A673 (cell line): ENCODE measurements at regions of chr1 and their contacts with region 1.

Region 1: GRCh38 chr1:154546264-154547063 is 12.0 kb downstream of the UBE2Q1 start:
- DNase-seq: peak; percentile 77
- H3K4me3 ChIP-seq: no peak overlapping the region
- H3K27ac ChIP-seq: no peak overlapping the region
- H3K4me1 ChIP-seq: no peaks in the 10 kb centered on the region
- H3K27me3 ChIP-seq: peaks cover 3% of the 10 kb centered on the region
- CTCF ChIP-seq: peak; percentile 71

Region 2: DNA sequence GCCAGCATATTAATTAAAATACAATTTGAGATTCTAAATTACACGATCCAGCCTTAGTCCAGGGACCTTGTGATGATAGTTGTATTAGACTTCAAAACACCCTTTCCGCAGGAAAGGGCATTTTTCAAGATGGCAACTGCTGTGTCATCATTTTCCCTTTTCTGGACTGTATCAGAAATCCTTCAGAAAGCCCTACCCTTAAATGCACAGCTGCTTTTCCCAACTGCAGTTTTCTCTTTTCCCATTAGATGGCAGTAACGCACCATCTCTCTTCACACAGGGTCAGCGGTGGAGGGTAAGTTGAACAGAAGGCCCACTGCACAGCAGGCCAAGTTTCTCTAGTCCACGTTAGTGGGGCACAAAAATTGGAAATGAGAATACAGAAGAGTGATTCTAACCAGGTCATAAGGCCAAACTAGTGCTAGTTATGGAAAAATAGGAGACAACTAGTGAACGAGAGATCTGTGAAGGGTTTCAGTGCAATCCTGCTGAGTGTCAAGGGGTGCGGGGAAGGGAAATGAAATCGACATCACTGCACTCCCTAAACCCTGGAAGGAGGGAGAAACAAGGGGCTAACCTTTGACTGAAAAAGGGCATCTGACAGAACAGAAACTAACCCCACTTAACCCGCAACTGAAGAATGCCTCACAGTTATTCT is 66.6 kb before region 1 on chr1:
- CTCF ChIA-PET with region 1: interaction called, 7 read pairs
- POLR2A ChIA-PET with region 1: no interaction called
- intact Hi-C with region 1: loop called (anchors 2 kb)
- DNase-seq: peak; percentile 95
- H3K4me3 ChIP-seq: no peak overlapping the region
- H3K27ac ChIP-seq: peak overlapping the region; percentile 39
- H3K4me1 ChIP-seq: peaks cover 33% of the 10 kb centered on the region
- H3K27me3 ChIP-seq: no peaks in the 10 kb centered on the region
- CTCF ChIP-seq: peak; percentile 95

Region 3: DNA sequence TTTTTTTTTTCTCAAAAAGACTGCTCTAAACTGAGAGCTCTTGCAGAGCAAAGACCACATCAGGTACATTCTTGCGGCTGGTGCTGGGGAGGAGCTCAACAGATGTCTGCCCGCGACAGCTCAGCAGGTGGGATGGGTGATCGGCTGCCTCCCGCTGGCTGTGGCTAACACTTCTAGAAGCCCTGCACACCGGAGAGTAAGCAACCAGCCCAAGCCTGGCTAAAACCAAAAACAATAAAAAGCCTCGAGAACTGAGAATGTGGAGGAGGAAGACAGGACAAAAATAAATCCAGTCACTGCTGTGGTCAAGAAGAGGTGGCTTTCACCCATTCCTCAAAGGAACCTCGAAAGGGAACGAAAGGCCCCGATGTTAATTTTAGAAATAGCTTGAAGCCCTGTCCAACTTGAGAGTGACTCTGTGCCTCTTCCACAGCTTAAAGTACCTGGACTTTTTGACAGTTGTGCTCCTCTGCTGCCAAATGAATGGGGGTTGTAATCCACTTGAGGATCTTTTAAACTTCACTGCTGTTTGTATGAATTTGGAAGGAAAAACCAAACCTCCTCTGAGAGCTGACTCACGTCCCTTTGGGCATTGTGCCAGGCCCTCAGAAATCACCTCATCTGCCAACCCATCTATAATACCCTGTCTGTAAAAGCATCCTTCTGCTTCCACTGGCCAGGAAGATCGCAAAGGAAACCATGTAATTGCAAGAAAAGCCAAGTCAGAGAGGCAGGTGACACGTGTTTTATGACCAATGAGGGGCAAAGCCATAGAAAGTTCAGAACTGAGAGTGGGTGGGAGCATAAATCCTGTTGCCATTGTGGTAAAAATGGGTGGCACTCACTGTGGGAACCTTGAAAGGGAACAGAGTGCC is 245.1 kb after region 1 on chr1:
- CTCF ChIA-PET with region 1: no interaction called
- POLR2A ChIA-PET with region 1: no interaction called
- intact Hi-C with region 1: no loop called
- DNase-seq: peak; percentile 69
- H3K4me3 ChIP-seq: no peak overlapping the region
- H3K27ac ChIP-seq: no peak overlapping the region
- H3K4me1 ChIP-seq: peaks cover 11% of the 10 kb centered on the region
- H3K27me3 ChIP-seq: no peaks in the 10 kb centered on the region
- CTCF ChIP-seq: peak; percentile 16; the same call in 1 of the 2 replicates

Region 4: GRCh38 chr1:155017041-155017945 is 470.8 kb after region 1 on chr1:
- CTCF ChIA-PET with region 1: interaction called, 10 read pairs
- POLR2A ChIA-PET with region 1: no interaction called
- intact Hi-C with region 1: no loop called
- DNase-seq: peak; percentile 91
- H3K4me3 ChIP-seq: peak overlapping the region; percentile 49
- H3K27ac ChIP-seq: peak overlapping the region; percentile 81
- H3K4me1 ChIP-seq: peaks cover 18% of the 10 kb centered on the region
- H3K27me3 ChIP-seq: no peaks in the 10 kb centered on the region
- CTCF ChIP-seq: peak; percentile 100